ENCODE measurements at regions of chr1 and their contacts with region 1.

Region 1: GRCh38 chr1:178417858-178418257 is 78.9 kb downstream of the CLEC20A start:
- DNase-seq: peak; percentile 17
- H3K4me3 Mint-ChIP-seq: no peak overlapping the region
- H3K27ac Mint-ChIP-seq: no peak overlapping the region
- H3K4me1 Mint-ChIP-seq: no peaks in the 10 kb centered on the region
- H3K27me3 Mint-ChIP-seq: no peaks in the 10 kb centered on the region
- CTCF ChIP-seq: no peak

Region 2: DNA sequence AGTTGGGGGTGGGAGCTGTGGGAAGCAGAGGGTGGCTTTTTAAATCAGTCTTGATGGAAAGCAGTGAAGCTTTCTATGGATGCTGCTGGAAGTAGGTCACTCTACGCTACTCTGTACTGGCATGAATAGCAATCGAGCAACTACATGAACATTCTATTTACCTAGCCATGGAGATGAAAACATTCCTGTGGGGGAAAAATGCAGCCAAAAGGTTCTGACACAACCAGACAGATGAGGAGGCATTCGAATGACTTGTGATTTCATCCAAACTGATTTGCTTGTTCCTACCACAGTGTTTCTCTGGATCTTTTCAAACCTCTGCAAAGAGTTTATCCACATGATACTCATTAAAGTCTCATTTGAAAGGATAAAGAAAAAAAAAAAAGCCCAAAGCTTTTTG is 1348.4 kb before region 1 on chr1:
- CTCF ChIA-PET with region 1: interaction called, 10 read pairs
- intact Hi-C with region 1: no loop called
- DNase-seq: no peak
- H3K4me3 Mint-ChIP-seq: no peak overlapping the region
- H3K27ac Mint-ChIP-seq: no peak overlapping the region
- H3K4me1 Mint-ChIP-seq: no peaks in the 10 kb centered on the region
- H3K27me3 Mint-ChIP-seq: peaks cover 49% of the 10 kb centered on the region
- CTCF ChIP-seq: no peak

Region 3: GRCh38 chr1:178361841-178362240 is 56.0 kb before region 1 on chr1:
- CTCF ChIA-PET with region 1: no interaction called
- intact Hi-C with region 1: loop called (anchors 5 kb)
- DNase-seq: no peak
- H3K4me3 Mint-ChIP-seq: no peak overlapping the region
- H3K27ac Mint-ChIP-seq: no peak overlapping the region
- H3K4me1 Mint-ChIP-seq: peaks cover 30% of the 10 kb centered on the region
- H3K27me3 Mint-ChIP-seq: no peaks in the 10 kb centered on the region
- CTCF ChIP-seq: no peak

Region 4: DNA sequence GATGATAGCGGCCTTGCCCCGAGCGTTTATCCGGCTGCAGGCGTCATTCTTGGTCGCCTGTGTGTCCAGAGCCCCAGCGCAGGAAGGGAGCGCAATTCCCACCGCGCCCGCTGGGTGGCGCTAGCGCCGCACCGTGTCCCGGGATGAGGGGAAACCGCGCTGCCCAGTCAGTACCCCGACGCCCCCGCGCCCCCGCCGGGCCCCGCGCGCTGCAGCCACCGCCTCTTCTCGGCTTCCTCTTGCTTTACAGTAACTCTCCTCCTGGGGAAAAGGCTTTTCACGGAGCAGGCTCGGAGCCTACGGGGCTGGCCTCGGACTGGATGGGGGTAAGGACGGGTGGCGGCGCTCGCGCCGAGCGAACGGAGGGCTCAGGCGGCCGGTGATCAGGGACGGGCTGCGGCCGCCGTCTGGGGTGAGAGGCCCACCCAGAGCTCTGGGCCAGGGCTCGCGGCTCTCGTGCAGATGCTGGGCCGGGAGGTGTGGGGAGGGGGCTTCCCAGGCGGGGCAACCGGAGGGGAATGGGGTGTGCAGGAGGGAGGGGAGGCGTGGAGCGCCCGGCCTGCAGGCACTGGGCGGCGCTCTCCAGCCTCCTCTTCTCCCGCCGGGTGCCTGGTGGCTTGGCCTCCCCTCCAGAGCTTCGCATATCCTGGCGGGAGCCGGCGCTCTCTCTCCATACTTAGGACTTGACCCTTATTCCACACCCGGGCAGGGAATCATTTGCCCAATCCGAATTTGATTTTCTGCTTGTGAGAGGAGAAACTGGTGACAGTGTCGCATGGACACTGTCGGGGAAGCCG is 124.9 kb after region 1 on chr1:
- CTCF ChIA-PET with region 1: no interaction called
- intact Hi-C with region 1: no loop called
- DNase-seq: peak; percentile 98
- H3K4me3 Mint-ChIP-seq: peak overlapping the region; percentile 95
- H3K27ac Mint-ChIP-seq: peak overlapping the region; percentile 56
- H3K4me1 Mint-ChIP-seq: peaks cover 38% of the 10 kb centered on the region
- H3K27me3 Mint-ChIP-seq: no peaks in the 10 kb centered on the region
- CTCF ChIP-seq: peak; percentile 97

Measured in Calu3 (cell line).